ENCODE measurements at regions of chr1 and their contacts with region 1.

Region 1: GRCh38 chr1:4652631-4653327 is 1.6 kb upstream of the AJAP1 start:
- DNase-seq: no peak
- ATAC-seq: no peak
- H3K4me3 ChIP-seq: no peak overlapping the region
- H3K27ac ChIP-seq: no peak overlapping the region
- H3K4me1 ChIP-seq: no peaks in the 10 kb centered on the region
- H3K27me3 ChIP-seq: peaks cover 30 to 45% (median 40%) of the 10 kb centered on the region in 3 donors
- CTCF ChIP-seq: peak; percentile 36 to 84 (median 66)
- POLR2A ChIP-seq: no peak

Region 2: GRCh38 chr1:4778056-4778455 is 125.3 kb after region 1 on chr1:
- in situ Hi-C with region 1: loop called in 1 of 4 experiments (anchors 10 kb)
- intact Hi-C with region 1: no loop called
- DNase-seq: no peak
- ATAC-seq: no peak
- H3K4me3 ChIP-seq: no peak overlapping the region
- H3K27ac ChIP-seq: no peak overlapping the region
- H3K4me1 ChIP-seq: no peaks in the 10 kb centered on the region
- H3K27me3 ChIP-seq: no peaks in the 10 kb centered on the region
- CTCF ChIP-seq: no peak
- POLR2A ChIP-seq: no peak